Activated CD4-positive, alpha-beta T cell treated with anti-CD3 and anti-CD28 coated beads, Interleukin-2, amount 10 ng/mL, durations not matched to agents 24 days and 14 days (primary cell): ENCODE measurements at regions of chrX and their contacts with region 1.

Region 1: GRCh38 chrX:66110112-66110511 is 53.9 kb upstream of the HEPH start:
- DNase-seq: no peak
- H3K4me3 Mint-ChIP-seq: no peak overlapping the region
- H3K27ac Mint-ChIP-seq: no peak overlapping the region
- H3K4me1 Mint-ChIP-seq: peaks cover 4% of the 10 kb centered on the region
- H3K27me3 Mint-ChIP-seq: no peaks in the 10 kb centered on the region

Region 2: DNA sequence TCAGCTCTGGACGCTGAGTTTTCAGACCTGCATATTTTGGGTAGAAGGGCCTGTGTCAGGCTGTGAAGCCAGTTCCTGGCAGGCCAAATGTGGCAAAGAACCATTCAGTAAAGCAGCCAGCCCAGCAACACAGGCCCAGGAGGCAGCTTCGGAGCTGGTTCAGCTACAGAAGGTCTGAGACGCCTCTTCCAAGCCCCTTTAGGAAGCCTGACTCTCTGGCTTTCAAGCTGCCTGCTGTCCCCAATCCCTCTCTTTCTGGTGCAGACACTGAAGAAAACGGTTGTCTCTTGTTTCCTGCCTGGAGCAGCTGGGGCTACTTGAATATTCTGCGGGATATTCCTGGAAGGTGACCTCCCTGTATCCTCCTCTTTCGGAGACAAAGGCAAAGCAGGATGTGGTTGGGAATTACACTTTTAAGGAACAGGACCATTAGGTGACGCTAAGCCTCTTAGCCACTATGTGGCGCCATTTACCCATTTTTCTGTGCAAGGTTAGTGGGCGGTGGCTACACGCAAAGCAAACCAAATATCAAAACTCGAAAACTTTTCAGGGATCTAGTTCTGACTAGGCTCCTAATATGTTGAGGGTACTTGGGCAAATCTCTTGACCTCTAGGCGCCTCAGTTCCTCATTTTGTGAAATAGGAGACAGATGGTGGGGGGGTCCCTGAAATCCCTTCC is 528.3 kb before region 1 on chrX:
- intact Hi-C with region 1: loop called (anchors 10 kb)
- DNase-seq: peak; percentile 86
- H3K4me3 Mint-ChIP-seq: no peak overlapping the region
- H3K27ac Mint-ChIP-seq: no peak overlapping the region
- H3K4me1 Mint-ChIP-seq: peaks cover 8% of the 10 kb centered on the region
- H3K27me3 Mint-ChIP-seq: no peaks in the 10 kb centered on the region

Region 3: DNA sequence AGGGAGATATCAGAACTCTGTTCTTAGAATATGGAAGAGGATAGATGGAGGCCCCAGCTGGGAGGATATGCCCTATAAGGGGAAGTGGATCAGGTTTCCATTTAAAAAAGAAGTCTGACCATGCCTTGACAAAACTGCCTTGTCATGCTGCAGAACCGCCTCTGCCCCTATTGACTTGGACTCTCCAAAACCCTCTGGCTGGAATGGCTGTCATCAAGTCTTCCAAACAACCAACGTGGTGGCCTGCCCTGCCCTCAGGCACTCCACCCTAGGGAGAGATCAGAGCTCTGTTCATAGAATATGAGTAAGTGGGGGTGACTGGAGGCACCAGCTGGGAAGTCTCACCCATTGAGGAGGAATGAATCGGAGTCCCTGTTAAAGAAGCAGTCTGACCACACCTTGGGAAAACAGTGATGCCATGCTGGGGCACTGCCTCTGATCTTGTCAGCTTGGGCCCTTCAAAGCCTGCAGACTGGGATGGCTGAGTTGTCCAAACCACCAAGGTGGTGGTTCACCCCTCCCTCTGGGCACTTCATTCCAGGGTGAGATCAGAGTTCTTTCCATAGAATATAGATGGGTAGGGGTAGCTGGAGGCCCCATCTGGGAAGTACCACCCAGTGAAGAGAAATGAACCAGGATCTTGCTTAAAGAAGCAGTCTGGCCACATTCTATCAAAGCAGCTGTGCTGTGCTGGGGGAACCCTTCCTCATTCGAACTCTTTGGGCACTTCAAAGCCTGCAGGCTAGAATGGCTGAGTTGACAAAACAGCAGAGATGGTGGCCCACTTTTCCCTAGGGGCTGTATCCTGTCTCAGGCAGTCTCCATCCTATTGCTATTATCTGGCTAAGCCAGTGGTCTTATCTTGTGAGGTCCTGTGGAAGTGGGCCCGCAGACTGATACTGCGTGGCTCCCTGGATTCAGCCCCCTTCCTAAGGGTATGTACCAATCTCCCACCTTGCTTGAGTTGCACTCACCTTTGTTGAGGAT is 184.8 kb before region 1 on chrX:
- intact Hi-C with region 1: no loop called
- DNase-seq: no peak
- H3K4me3 Mint-ChIP-seq: peak overlapping the region; percentile 48
- H3K27ac Mint-ChIP-seq: peak overlapping the region; percentile 93
- H3K4me1 Mint-ChIP-seq: peaks cover 47% of the 10 kb centered on the region
- H3K27me3 Mint-ChIP-seq: no peaks in the 10 kb centered on the region

Region 4: DNA sequence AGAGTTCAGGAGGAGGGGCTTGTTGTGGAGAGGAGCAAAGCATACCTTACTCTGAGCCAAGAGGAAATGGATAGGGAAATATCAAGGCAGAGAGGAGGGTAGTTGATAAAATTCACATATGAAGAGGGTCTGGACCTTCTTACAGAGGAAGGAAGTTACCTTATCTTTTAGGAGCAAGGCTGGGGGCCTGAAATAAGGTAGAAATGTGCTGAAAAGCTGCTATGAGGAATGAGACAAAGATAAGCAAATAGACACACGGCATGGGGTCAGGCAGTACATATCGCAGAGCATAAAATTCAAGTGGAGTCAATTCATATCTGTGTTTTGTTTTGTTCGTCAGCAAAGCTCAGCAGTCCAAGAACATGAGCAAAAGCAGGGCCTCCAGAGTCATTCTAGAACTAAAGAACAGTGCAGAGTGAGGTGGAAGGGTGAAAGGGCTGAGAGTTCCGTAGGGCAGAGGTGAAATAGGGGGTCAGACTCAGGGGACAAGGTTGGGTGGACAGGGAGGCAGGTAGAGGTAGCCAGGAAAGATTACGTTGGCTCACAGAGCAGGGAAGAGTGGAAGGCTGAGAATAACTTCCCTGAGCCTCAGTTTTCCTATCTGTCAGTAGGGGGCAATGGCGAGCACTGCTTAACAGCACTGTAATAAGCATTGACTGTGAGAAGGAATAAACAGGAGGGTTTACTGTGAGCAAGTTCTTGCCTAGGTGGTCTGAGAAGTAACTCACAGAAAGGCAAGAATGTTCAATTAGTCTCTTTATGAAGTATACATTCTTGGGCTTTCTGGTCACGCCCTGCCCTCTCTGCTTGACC is 79.4 kb before region 1 on chrX:
- intact Hi-C with region 1: loop called (anchors 5 kb)
- DNase-seq: peak; percentile 71
- H3K4me3 Mint-ChIP-seq: no peak overlapping the region
- H3K27ac Mint-ChIP-seq: no peak overlapping the region
- H3K4me1 Mint-ChIP-seq: peaks cover 8% of the 10 kb centered on the region
- H3K27me3 Mint-ChIP-seq: no peaks in the 10 kb centered on the region

Region 5: DNA sequence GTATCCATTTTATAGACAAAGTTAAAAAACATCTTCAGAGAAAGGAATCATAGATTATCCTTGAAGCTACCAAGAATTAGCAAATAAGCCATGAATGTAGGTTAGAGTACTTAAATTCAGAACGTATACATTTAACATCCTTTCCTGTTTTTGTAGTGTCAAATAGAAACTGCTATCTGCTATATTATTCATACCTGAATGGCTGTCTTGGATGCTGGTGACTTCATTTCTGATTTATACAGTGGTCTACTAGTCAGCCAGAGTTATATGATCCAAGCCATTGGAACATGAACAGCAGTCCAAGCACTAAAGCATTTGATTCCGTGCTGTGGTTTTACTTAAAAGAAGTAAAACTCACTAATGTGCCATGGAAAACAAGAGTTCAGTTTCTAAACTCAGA is 11.9 kb before region 1 on chrX:
- intact Hi-C with region 1: no loop called
- DNase-seq: no peak
- H3K4me3 Mint-ChIP-seq: no peak overlapping the region
- H3K27ac Mint-ChIP-seq: no peak overlapping the region
- H3K4me1 Mint-ChIP-seq: no peaks in the 10 kb centered on the region
- H3K27me3 Mint-ChIP-seq: no peaks in the 10 kb centered on the region